ENCODE measurements at regions of chr5 and their contacts with region 1.

Region 1: GRCh38 chr5:136166909-136167308 is 26.1 kb downstream of the SMIM32 start:
- DNase-seq: no peak
- ATAC-seq: no peak
- H3K4me3 ChIP-seq: no peak overlapping the region
- H3K27ac ChIP-seq: no peak overlapping the region
- H3K4me1 ChIP-seq: peaks cover 0 to 3% of the 10 kb centered on the region in 2 donors
- H3K27me3 ChIP-seq: no peaks in the 10 kb centered on the region

Region 2: GRCh38 chr5:135909639-135910038 is 257.3 kb before region 1 on chr5:
- intact Hi-C with region 1: no loop called
- DNase-seq: no peak
- ATAC-seq: no peak
- H3K4me3 ChIP-seq: no peak overlapping the region
- H3K27ac ChIP-seq: no peak overlapping the region
- H3K4me1 ChIP-seq: no peaks in the 10 kb centered on the region
- H3K27me3 ChIP-seq: peaks cover 0 to 1% of the 10 kb centered on the region in 2 donors

Region 3: GRCh38 chr5:136132557-136133221 is 34.2 kb before region 1 on chr5 and contains the start of gene SMAD5:
- intact Hi-C with region 1: loop called in 1 of 2 experiments (anchors 5 kb)
- DNase-seq: peak; percentile 98 to 99
- ATAC-seq: peak; percentile 99
- H3K4me3 ChIP-seq: peak within 1 kb of the TSS; percentile 44 to 96
- H3K27ac ChIP-seq: peak within 1 kb of the TSS; percentile 85 to 91
- H3K4me1 ChIP-seq: peaks cover 0 to 2% of the 10 kb centered on the region in 2 donors
- H3K27me3 ChIP-seq: no peaks in the 10 kb centered on the region
- total RNA-seq, gene SMAD5: 85.2 to 85.8 TPM

Measured in aorta (tissue), 5 donors.